Posterior cingulate gyrus (tissue), 11 donors: ENCODE measurements at regions of chr1 and their contacts with region 1.

Region 1: GRCh38 chr1:61851849-61852669 is 109.8 kb downstream of the PATJ start:
- DNase-seq: no peak

Region 2: GRCh38 chr1:59971464-59971911 is 1880.6 kb before region 1 on chr1:
- intact Hi-C with region 1: loop called (anchors 2 kb)
- DNase-seq: peak; percentile 64 to 97 (median 82)

Region 3: GRCh38 chr1:60281360-60281932 is 1570.6 kb before region 1 on chr1:
- intact Hi-C with region 1: loop called (anchors 5 kb)
- DNase-seq: peak; percentile 49 to 95 (median 68)

Region 4: DNA sequence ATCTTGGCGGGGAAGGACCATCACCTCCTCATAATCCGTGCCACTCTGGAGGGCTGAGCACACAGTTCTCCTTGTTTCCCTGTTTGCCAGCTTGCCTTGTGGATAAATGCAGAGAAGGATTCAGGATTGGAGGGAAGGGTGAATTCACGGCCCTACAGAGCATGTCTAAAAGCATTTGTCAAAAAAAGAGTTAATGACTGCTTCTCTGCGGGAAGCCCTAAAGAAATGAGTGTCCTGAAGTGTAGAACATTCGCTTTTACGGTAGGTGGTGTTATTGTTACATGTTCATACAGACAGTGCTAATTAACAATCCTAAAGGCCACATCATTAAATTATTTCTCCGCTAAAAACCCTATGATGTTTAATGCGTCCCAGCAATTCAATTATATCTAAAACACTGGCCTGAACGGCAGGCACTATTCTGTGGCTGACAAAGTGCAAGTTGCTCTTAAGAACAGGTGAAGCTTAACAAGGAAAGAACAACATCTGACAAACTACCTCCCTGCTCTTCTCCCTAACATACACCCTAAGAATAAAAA is 882.0 kb before region 1 on chr1:
- intact Hi-C with region 1: loop called (anchors 2 kb)
- DNase-seq: no peak

Region 5: GRCh38 chr1:61043010-61043820 is 808.8 kb before region 1 on chr1:
- intact Hi-C with region 1: loop called (anchors 2 kb)
- DNase-seq: peak; percentile 63 to 97 (median 87)

Region 6: DNA sequence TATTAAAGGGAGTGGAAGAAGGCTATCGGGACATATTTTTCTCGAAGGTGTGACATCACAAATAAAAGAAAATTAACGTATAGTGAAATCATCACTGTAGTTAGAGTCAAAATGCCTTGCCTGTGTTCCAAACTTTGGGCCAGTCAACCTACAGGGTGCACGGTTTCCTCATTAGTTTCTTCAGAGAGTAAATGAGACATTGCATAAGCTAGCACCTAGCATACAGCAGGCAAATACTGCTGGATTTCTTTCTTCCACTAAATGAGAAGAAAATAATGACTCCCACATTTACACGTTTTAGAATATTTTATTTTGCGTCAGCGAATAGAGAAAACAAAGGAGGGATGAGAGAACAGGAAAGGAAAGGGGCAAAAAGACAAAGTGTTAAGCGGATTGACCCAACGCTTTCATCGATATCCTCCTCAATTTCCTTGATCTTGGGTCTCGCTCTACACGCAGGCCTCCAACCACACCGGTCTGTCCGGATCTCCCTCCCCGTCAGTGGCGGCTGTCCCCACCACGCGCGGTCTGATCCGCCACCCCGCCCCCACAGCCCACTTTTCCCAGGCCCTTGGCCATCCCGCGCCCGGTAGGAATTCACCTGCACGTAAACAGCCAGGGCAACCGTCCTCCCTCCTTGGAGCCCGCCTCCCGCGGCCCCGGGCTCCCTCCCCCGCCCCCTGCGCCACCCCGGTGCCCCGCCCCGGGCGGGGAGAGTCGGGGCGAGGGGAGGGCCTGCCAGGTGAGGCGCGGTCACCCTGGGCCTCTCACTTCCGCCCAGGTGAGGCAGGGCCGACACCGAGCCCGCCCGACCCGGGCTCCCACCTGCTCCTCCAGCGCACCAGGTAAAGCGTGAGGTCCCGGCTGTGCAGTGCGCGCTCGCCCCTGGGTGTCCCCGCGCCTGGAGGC is 110.1 kb before region 1 on chr1 and contains the start of gene PATJ:
- intact Hi-C with region 1: no loop called
- DNase-seq: peak; percentile 32 to 92 (median 57)